Mammary epithelial cell (primary cell): ENCODE measurements at regions of chr19 and their contacts with region 1.

Region 1: DNA sequence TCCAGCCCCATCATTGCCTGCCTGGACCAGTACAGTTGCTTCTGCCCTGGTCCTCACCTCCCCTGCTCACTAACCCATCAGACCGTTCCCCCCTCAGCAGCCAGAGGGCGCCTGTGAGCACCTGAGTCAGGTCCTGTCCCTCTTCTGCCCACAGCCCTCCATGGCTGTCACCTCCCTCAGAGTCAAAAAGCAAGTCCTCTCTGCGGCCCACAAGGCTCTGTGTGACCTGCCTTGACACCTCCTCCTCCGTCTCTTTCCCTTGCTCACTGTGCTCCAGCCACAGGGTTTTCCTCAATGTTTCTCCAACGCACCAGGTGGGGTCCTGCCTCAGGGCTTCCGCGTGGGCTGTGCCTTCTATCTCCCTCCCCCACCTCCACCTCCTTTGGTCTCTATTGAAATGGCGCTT is 29.4 kb upstream of the PTPRS start:
- DNase-seq: no peak
- H3K4me3 ChIP-seq: no peak overlapping the region
- H3K27ac ChIP-seq: no peak overlapping the region
- H3K4me1 ChIP-seq: no peaks in the 10 kb centered on the region
- H3K27me3 ChIP-seq: no peaks in the 10 kb centered on the region
- CTCF ChIP-seq: peak; percentile 57 to 71

Region 2: GRCh38 chr19:5038631-5039271 is 331.2 kb before region 1 on chr19:
- CTCF ChIA-PET with region 1: interaction called, 24 read pairs
- dilution Hi-C with region 1: no loop called
- in situ Hi-C with region 1: no loop called
- intact Hi-C with region 1: no loop called
- DNase-seq: no peak
- H3K4me3 ChIP-seq: no peak overlapping the region
- H3K27ac ChIP-seq: no peak overlapping the region
- H3K4me1 ChIP-seq: peaks cover 24% of the 10 kb centered on the region
- H3K27me3 ChIP-seq: no peaks in the 10 kb centered on the region
- CTCF ChIP-seq: peak; percentile 36 to 40

Region 3: GRCh38 chr19:5170329-5170745 is 199.6 kb before region 1 on chr19:
- CTCF ChIA-PET with region 1: no interaction called
- dilution Hi-C with region 1: loop called (anchors 10 kb)
- in situ Hi-C with region 1: no loop called
- intact Hi-C with region 1: no loop called
- DNase-seq: no peak
- H3K4me3 ChIP-seq: no peak overlapping the region
- H3K27ac ChIP-seq: no peak overlapping the region
- H3K4me1 ChIP-seq: no peaks in the 10 kb centered on the region
- H3K27me3 ChIP-seq: no peaks in the 10 kb centered on the region
- CTCF ChIP-seq: peak; percentile 32 to 57

Region 4: GRCh38 chr19:5255602-5256231 is 114.2 kb before region 1 on chr19:
- CTCF ChIA-PET with region 1: no interaction called
- dilution Hi-C with region 1: loop called (anchors 5 kb)
- in situ Hi-C with region 1: no loop called
- intact Hi-C with region 1: no loop called
- DNase-seq: no peak
- H3K4me3 ChIP-seq: no peak overlapping the region
- H3K27ac ChIP-seq: no peak overlapping the region
- H3K4me1 ChIP-seq: peaks cover 5% of the 10 kb centered on the region
- H3K27me3 ChIP-seq: peaks cover 2% of the 10 kb centered on the region
- CTCF ChIP-seq: no peak

Region 5: GRCh38 chr19:5417495-5418436 is 47.8 kb after region 1 on chr19:
- CTCF ChIA-PET with region 1: no interaction called
- dilution Hi-C with region 1: no loop called
- in situ Hi-C with region 1: no loop called
- intact Hi-C with region 1: no loop called
- DNase-seq: no peak
- H3K4me3 ChIP-seq: no peak overlapping the region
- H3K27ac ChIP-seq: no peak overlapping the region
- H3K4me1 ChIP-seq: no peaks in the 10 kb centered on the region
- H3K27me3 ChIP-seq: peaks cover 5% of the 10 kb centered on the region
- CTCF ChIP-seq: no peak

Region 6: DNA sequence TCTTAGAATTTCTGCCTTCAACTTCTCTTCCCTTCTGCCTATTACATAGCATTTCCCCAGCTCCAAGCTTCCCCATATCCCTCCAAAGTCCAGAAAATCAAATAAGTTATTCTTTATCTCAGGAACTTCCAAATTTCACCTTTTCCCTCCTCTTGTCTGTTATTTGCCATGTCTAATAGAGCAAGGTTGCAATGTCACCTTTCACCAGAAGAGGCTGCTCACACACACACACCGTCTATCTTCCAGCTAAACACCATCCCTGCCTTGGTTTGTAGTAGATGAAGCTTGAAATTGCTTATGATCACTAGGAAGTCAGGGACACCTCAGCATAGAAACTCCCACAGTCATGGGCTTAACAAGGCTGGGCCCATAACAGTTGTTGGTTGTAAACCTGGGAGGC is 133.6 kb after region 1 on chr19:
- CTCF ChIA-PET with region 1: no interaction called
- dilution Hi-C with region 1: loop called (anchors 5 kb)
- in situ Hi-C with region 1: no loop called
- intact Hi-C with region 1: no loop called
- DNase-seq: no peak
- H3K4me3 ChIP-seq: no peak overlapping the region
- H3K27ac ChIP-seq: no peak overlapping the region
- H3K4me1 ChIP-seq: no peaks in the 10 kb centered on the region
- H3K27me3 ChIP-seq: no peaks in the 10 kb centered on the region
- CTCF ChIP-seq: peak in 1 of 2 donors; percentile 34

Region 7: GRCh38 chr19:5839065-5840017 is 469.4 kb after region 1 on chr19 and contains the start of gene FUT6:
- CTCF ChIA-PET with region 1: no interaction called
- dilution Hi-C with region 1: loop called (anchors 10 kb)
- in situ Hi-C with region 1: no loop called
- intact Hi-C with region 1: no loop called
- DNase-seq: no peak
- H3K4me3 ChIP-seq: no peak within 1 kb of the TSS
- H3K27ac ChIP-seq: no peak within 1 kb of the TSS
- H3K4me1 ChIP-seq: no peaks in the 10 kb centered on the region
- H3K27me3 ChIP-seq: peaks cover 3% of the 10 kb centered on the region
- CTCF ChIP-seq: no peak
- total RNA-seq, gene FUT6: 0.17 TPM in 1 of 2 donors, not detected in the other